Activated T-helper 2 cell treated with anti-CD3 and anti-CD28 coated beads, Interferon-gamma antibody, Interleukin-2, Interleukin-4, amounts not matched to agents 10 μg/mL and 5 μg/mL and 100 μg/mL, durations not matched to agents 14 hours and 24 hours and 36 hours (primary cell): ENCODE measurements at regions of chr13 and their contacts with region 1.

Region 1: GRCh38 chr13:39037880-39038568 is at the starts of genes NHLRC3 and PROSER1:
- DNase-seq: peak; percentile 74
- H3K4me3 Mint-ChIP-seq: peak within 1 kb of the TSS; percentile 94
- H3K27ac Mint-ChIP-seq: peak within 1 kb of the TSS; percentile 94
- H3K4me1 Mint-ChIP-seq: peaks cover 38% of the 10 kb centered on the region
- H3K27me3 Mint-ChIP-seq: no peaks in the 10 kb centered on the region
- total RNA-seq, gene NHLRC3: 21.6 and 22.5 TPM in 2 replicates
- total RNA-seq, gene PROSER1: 90.9 and 92.0 TPM in 2 replicates

Region 2: DNA sequence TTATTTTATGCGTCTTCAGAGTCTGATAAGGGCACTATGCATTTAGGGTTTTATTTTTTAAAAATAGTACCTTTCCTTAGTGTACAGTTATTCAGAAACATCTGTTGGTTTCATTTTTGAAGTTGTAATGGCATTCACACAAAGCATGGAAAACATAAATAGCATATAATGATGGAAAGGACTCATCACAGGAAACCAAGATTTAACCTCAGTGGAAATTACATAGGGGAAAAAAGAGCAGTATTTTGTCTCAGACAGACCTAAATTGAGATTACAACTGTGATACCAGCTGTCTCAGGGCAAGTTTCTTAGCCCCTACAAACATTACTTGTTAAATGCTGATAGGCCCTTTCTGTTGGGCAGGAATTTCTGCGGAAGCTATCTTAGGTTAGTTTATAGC is 57.5 kb after region 1 on chr13:
- intact Hi-C with region 1: loop called (anchors 1 kb)
- DNase-seq: no peak
- H3K4me3 Mint-ChIP-seq: peak overlapping the region; percentile 31
- H3K27ac Mint-ChIP-seq: peak overlapping the region; percentile 94
- H3K4me1 Mint-ChIP-seq: peaks cover 35% of the 10 kb centered on the region
- H3K27me3 Mint-ChIP-seq: no peaks in the 10 kb centered on the region

Region 3: GRCh38 chr13:39196958-39197646 is 159.1 kb after region 1 on chr13:
- intact Hi-C with region 1: loop called (anchors 5 kb)
- DNase-seq: no peak
- H3K4me3 Mint-ChIP-seq: no peak overlapping the region
- H3K27ac Mint-ChIP-seq: peak overlapping the region; percentile 72
- H3K4me1 Mint-ChIP-seq: peaks cover 9% of the 10 kb centered on the region
- H3K27me3 Mint-ChIP-seq: peaks cover 11% of the 10 kb centered on the region

Region 4: DNA sequence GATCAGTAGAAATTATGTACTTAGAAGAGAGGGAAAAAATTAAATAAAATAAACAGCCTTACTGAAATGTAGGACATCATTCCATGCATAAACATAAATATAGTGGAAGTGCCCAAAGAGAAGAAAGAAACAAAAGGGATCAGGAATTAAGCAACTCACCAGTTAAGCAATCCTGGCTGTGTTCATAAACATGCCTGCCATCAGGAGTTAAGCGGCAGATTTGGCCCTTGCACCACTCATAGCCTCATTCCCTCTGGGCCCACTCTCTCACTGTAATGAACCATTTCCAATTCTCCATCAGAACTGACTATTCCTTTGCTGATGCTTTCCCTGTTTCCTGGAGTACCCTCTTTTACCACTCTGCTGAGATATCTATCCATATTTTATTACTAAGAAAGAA is 283.6 kb after region 1 on chr13:
- intact Hi-C with region 1: no loop called
- DNase-seq: no peak
- H3K4me3 Mint-ChIP-seq: no peak overlapping the region
- H3K27ac Mint-ChIP-seq: no peak overlapping the region
- H3K4me1 Mint-ChIP-seq: no peaks in the 10 kb centered on the region
- H3K27me3 Mint-ChIP-seq: no peaks in the 10 kb centered on the region

Region 5: DNA sequence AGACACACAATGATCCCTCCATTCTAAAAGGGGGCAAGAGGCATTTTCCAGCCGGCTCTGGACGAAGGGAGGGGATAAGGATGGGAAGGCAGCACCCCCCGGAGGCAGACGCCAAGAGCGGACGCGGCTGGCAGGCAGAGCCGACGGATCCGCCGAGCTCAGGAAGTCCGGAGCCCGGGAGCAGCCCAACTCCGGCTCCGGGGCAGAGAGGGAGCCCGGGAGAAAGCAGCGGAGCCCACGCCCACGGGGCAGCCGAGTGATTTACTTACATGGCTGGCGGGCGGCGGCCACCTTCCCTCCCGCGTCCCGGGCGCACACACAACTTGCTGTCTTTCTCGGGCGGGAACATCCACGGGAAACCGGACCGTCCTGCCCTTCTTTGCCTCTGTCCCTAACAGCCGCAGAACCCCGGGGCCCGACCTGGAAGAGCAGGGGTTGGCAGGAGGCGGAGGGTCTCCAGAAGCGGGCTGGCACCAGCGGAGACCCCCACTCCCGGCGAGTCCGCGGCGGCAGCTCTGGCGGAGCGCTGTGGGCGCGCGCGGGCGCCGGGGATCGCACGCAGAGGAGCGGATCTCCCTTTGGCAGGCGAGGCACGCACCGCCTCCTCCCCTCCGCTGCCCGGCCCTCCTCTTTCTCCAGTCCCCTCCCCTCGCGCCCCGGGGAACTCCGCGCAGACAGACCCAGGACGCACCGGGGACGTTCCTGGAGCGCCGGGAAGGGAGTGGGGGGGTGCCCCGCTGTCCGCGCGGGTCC is 564.8 kb after region 1 on chr13 and contains the start of gene LHFPL6:
- intact Hi-C with region 1: loop called (anchors 5 kb)
- DNase-seq: peak; percentile 47
- H3K4me3 Mint-ChIP-seq: peak within 1 kb of the TSS; percentile 78
- H3K27ac Mint-ChIP-seq: peak within 1 kb of the TSS; percentile 36
- H3K4me1 Mint-ChIP-seq: peaks cover 13% of the 10 kb centered on the region
- H3K27me3 Mint-ChIP-seq: peaks cover 55% of the 10 kb centered on the region
- total RNA-seq, gene LHFPL6: 4.8 and 5.8 TPM in 2 replicates

Region 6: GRCh38 chr13:40770934-40771618 is 1733.1 kb after region 1 on chr13 and contains the start of gene MRPS31:
- intact Hi-C with region 1: loop called (anchors 10 kb)
- DNase-seq: peak; percentile 94
- H3K4me3 Mint-ChIP-seq: peak within 1 kb of the TSS; percentile 89
- H3K27ac Mint-ChIP-seq: peak within 1 kb of the TSS; percentile 90
- H3K4me1 Mint-ChIP-seq: peaks cover 36% of the 10 kb centered on the region
- H3K27me3 Mint-ChIP-seq: no peaks in the 10 kb centered on the region
- total RNA-seq, gene MRPS31: 42.9 and 43.1 TPM in 2 replicates